ENCODE measurements at regions of chr11 and their contacts with region 1.

Region 1: DNA sequence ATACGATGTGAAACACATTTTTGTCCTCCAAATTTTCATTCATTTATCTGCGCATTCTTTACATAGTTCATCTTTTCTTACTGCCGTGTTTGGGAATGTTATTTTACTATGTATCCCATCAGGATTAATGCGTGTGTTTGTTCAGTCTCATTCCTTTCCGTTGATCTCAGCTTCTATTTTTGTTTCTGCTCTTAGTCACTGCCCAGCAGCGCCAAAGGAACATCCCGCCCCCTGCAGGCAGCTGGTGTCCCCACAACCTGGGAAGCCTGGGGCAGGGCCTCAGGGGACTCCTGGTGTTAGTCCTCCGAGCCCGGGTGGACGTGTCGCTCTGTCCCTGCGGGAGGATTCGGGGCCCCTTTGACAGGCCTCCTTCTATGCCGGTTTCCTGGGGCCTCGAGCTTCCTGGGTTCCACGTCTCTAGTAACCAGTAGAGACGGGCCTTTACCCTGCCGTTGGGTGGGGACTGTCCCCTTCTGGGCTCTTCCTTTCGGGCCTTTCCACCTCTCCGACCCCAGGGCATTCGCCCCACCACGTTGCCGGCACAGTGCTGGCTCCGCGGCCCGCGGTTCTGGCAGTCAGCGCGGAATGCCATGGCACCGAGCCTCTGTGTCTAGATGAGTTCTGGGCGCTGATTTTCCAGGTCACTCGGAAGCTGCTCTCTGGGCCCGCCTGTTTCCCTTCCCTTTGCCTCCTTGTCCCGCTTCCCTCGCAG is 39.8 kb downstream of the WEE1 start:
- DNase-seq: peak; percentile 96
- H3K4me3 Mint-ChIP-seq: peak overlapping the region; percentile 90
- H3K27ac Mint-ChIP-seq: peak overlapping the region; percentile 98
- H3K4me1 Mint-ChIP-seq: peaks cover 35% of the 10 kb centered on the region
- H3K27me3 Mint-ChIP-seq: no peaks in the 10 kb centered on the region

Region 2: DNA sequence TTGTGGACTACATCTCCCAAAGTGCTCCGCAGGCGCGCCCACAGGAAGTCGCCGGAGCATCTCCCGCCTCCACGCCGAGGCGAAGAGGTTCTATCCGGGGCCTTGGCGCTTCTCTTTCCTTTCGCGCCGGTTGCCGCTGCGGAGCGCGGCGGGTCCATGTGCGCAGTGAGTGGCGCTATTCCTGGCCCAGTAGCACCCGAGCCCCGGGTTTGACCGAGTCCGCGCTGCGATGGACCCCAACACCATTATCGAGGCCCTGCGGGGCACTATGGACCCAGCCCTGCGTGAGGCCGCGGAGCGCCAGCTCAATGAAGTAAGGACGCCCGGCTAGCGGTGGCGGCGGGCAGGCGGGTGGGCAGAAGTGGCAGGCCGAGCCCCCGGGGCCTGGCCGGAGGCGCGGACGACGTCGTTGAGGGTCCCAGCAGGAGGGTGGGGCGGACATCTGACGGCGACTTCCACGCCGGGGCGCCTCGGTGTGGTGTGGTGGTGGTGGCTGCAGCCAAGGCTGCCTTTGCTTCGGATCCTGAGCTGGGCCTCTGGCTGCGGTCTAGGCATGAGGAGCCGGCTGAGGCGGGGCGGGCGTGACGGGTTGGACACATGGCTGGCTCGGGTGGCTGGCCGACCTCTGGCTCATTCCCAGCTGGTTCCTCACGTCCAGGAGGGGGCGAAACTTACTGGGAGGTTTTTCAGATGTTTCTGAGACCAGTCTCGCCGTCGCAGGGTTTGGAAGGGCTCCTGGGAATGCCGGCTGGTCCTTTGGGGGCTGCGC is 228.6 kb before region 1 on chr11 and contains the start of gene IPO7:
- intact Hi-C with region 1: loop called (anchors 10 kb)
- DNase-seq: peak; percentile 97
- H3K4me3 Mint-ChIP-seq: peak within 1 kb of the TSS; percentile 95
- H3K27ac Mint-ChIP-seq: peak within 1 kb of the TSS; percentile 94
- H3K4me1 Mint-ChIP-seq: peaks cover 21% of the 10 kb centered on the region
- H3K27me3 Mint-ChIP-seq: no peaks in the 10 kb centered on the region
- total RNA-seq, gene IPO7: 177 and 200 TPM in 2 replicates

Region 3: DNA sequence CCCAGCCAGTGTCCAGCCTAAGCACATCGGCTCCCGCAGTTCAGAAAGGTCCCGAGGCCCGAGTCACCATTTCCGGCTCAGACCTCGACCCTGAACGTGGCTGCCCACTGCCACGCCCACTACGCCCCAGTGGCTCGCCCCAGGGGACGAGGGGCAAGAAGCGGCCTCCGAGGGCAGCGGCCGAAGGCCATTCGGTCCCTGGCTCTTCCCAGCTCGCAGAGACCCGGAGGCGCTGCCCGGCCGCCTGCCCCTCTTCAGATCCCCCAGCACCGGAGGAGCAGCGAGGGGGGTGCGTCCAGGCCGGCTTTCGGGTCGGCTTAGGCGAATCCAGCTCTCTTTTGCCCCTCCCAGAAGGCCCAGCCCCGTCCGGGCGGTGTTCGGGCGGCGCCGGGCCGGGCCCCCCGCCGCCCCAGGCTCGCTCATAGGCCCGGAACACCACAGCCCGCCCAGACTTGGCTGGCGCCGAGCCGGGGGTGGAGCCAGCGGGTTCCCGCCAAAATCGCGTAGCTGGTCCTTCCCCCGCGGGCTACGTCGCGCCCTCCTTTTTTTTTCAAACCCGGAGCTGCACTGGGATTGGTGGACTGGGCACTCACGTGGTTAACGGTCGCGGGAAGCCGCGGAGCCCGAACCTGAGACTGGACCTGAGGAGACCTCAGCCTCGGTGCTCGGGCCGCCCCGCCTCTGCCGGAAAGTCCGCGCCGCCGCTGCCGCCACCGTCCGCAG is 40.1 kb before region 1 on chr11 and contains the start of gene WEE1:
- intact Hi-C with region 1: loop called (anchors 1 kb)
- DNase-seq: peak; percentile 100
- H3K4me3 Mint-ChIP-seq: peak within 1 kb of the TSS; percentile 96
- H3K27ac Mint-ChIP-seq: peak within 1 kb of the TSS; percentile 93
- H3K4me1 Mint-ChIP-seq: peaks cover 30% of the 10 kb centered on the region
- H3K27me3 Mint-ChIP-seq: peaks cover 6% of the 10 kb centered on the region
- total RNA-seq, gene WEE1: 55.5 and 57.7 TPM in 2 replicates

Region 4: DNA sequence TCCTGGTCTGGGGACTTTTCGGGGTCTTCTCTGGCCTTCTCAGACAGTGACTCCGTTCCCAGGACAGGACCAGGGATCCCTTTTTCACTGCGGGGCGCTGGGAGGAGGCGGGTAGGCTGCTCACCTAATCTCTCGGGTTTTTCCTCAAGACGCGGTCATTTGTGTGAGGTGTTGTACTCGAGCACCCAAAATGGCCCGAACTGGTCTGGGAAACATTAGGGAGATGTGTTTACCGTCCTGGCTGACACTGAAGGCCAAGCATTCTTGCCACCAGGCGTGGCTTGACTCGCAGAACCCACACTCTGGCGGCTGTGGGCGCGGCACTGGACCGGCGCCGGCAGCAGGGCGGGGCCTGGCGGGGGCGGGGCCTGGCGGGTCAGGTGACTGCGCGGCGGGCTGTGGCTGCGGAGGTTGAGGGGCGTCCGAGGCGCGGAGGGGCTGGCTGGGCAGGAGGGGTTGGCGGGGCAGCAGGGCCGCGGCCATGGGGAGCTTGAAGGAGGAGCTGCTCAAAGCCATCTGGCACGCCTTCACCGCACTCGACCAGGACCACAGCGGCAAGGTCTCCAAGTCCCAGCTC is 50.5 kb after region 1 on chr11 and contains the start of gene SWAP70:
- intact Hi-C with region 1: loop called (anchors 1 kb)
- DNase-seq: peak; percentile 95
- H3K4me3 Mint-ChIP-seq: peak within 1 kb of the TSS; percentile 90
- H3K27ac Mint-ChIP-seq: peak within 1 kb of the TSS; percentile 51
- H3K4me1 Mint-ChIP-seq: peaks cover 18% of the 10 kb centered on the region
- H3K27me3 Mint-ChIP-seq: peaks cover 34% of the 10 kb centered on the region
- total RNA-seq, gene SWAP70: 7.3 and 8.1 TPM in 2 replicates

Region 5: DNA sequence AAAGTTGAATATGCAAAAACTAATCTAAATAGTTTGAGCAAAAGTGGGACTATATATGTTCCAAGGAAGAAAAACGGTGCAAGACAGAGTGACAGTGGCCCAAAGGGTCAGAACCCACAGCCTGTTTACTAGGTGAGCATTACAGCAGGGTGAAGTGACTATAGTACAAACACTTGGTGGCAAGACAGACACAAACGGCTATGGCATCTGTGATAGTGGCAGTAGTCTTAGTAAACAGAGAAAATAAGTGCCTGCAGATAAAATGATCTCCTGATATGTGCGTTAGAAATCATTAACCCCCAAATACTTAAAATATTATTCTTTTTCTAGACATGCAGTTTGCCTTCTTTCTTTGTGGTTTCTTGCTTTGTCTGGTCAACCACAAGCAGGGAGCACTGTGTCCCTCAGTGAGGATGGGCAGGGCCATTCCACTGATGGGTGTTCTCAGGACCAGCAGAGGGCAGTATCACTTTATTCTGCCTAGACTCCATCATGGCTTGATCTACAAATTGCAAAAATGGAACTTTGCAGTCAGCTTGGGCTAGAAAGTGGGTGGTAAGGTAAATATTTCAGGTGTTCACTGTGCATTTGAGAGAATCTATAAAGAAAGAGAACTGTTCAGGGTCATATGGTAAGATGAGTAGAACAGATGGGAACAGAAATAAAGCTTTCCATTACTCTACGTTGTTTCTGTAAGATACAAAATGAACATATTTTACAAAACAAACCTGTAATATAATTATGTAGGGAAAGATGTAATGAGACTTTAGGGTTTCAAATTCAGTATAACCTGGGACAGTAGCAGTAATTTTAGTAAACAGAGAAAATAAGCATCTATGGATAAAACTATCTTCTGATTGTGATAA is 248.8 kb after region 1 on chr11:
- intact Hi-C with region 1: loop called (anchors 5 kb)
- DNase-seq: peak; percentile 84
- H3K4me3 Mint-ChIP-seq: no peak overlapping the region
- H3K27ac Mint-ChIP-seq: peak overlapping the region; percentile 7
- H3K4me1 Mint-ChIP-seq: peaks cover 33% of the 10 kb centered on the region
- H3K27me3 Mint-ChIP-seq: peaks cover 1% of the 10 kb centered on the region

Region 6: GRCh38 chr11:10322830-10323792 is 709.8 kb after region 1 on chr11:
- intact Hi-C with region 1: loop called (anchors 1 kb)
- DNase-seq: peak; percentile 85
- H3K4me3 Mint-ChIP-seq: peak overlapping the region; percentile 62
- H3K27ac Mint-ChIP-seq: peak overlapping the region; percentile 94
- H3K4me1 Mint-ChIP-seq: peaks cover 21% of the 10 kb centered on the region
- H3K27me3 Mint-ChIP-seq: peaks cover 13% of the 10 kb centered on the region

Measured in activated CD4-positive, alpha-beta T cell treated with anti-CD3 and anti-CD28 coated beads, Interleukin-2, amount 10 ng/mL, durations not matched to agents 24 days and 14 days (primary cell).